ENCODE measurements at regions of chr17 and their contacts with region 1.

Region 1: DNA sequence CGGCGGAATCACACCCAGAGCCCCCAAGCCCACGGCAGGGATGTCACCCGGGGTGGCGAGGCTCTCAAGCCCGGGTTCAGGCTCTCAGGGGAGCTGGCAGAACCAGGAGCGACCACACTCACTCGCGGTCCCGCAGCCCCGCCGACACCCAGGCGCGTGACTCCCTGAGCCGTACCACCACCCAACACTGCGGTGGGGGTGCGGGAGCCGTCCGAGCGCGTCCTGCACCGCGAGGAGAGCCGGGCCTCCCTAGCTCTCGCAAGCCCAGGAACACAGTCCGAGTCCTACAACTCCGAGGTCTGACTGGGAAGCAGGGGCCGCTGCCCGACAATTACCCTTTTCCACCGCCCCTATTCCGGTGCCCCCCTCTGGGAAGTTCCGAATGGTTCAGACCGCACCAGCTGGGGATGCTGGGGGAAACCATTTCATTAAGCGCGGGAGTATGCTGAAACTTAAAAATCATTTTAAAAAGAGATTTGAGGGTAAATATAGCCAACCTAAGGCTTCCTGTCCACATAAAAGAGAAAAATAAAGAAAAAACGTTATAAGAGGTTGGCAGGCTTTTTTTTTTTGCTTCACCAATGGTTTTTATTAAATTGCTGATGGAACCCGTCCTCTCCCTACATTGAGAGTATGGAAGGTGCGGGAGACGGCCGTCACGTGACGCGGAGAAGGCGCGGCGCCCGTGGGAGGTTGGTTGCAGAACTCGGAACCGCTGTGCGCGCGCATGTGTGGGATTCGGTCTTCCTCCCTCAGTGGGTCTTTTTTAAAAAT is at the start of gene FLCN:
- DNase-seq: peak; percentile 78 to 95 (median 87)
- ATAC-seq: peak; percentile 91
- H3K4me3 ChIP-seq: peak within 1 kb of the TSS; percentile 99
- H3K4me3 Mint-ChIP-seq: peak within 1 kb of the TSS; percentile 96
- H3K27ac ChIP-seq: peak within 1 kb of the TSS; percentile 85 to 91
- H3K27ac Mint-ChIP-seq: peak within 1 kb of the TSS; percentile 98
- H3K4me1 ChIP-seq: peaks cover 26% of the 10 kb centered on the region
- H3K4me1 Mint-ChIP-seq: peaks cover 33% of the 10 kb centered on the region
- H3K27me3 ChIP-seq: no peaks in the 10 kb centered on the region
- H3K27me3 Mint-ChIP-seq: no peaks in the 10 kb centered on the region
- CTCF ChIP-seq: no peak
- total RNA-seq, gene FLCN: 12.1 to 15.9 TPM

Region 2: DNA sequence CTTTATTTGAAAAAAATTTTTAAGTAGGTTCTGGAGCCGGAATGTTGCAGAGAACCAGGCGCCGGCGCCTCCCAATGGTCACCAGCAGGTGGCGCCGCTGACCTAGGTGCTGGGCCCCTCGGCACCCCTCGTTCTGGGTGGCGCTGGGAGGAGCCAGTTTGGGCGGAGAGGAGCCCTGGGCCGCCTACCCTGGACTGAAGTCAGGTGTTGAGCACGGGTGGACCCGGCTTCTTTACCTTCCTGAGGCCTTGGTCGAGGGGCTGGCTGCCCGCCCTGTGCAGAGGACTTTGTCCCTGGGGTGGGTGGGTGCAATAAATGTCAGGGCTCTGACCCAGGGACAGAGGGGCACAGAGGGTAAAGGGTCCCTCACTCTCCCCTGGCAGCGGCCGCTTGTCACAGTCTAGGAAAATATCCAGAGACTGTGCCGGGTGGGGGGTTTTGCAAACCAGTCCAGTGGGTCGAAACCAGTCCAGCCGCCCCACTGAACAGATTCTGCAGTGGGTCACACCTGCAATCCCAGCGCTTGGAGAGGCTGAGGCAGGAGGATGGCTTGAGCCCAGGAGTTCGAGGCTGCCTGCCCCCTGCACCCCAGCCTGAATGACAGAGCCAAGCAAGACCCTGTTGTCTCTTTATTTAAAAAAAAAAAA is 235.2 kb before region 1 on chr17:
- CTCF ChIA-PET with region 1: no interaction called
- POLR2A ChIA-PET with region 1: no interaction called
- intact Hi-C with region 1: loop called in 1 of 2 experiments (anchors 10 kb)
- DNase-seq: peak; percentile 54 to 87 (median 74)
- ATAC-seq: peak; percentile 97
- H3K4me3 ChIP-seq: no peak overlapping the region
- H3K4me3 Mint-ChIP-seq: no peak overlapping the region
- H3K27ac ChIP-seq: no peak overlapping the region
- H3K27ac Mint-ChIP-seq: no peak overlapping the region
- H3K4me1 ChIP-seq: peaks cover 16% of the 10 kb centered on the region
- H3K4me1 Mint-ChIP-seq: peaks cover 5% of the 10 kb centered on the region
- H3K27me3 ChIP-seq: no peaks in the 10 kb centered on the region
- H3K27me3 Mint-ChIP-seq: no peaks in the 10 kb centered on the region
- CTCF ChIP-seq: peak; percentile 96

Region 3: DNA sequence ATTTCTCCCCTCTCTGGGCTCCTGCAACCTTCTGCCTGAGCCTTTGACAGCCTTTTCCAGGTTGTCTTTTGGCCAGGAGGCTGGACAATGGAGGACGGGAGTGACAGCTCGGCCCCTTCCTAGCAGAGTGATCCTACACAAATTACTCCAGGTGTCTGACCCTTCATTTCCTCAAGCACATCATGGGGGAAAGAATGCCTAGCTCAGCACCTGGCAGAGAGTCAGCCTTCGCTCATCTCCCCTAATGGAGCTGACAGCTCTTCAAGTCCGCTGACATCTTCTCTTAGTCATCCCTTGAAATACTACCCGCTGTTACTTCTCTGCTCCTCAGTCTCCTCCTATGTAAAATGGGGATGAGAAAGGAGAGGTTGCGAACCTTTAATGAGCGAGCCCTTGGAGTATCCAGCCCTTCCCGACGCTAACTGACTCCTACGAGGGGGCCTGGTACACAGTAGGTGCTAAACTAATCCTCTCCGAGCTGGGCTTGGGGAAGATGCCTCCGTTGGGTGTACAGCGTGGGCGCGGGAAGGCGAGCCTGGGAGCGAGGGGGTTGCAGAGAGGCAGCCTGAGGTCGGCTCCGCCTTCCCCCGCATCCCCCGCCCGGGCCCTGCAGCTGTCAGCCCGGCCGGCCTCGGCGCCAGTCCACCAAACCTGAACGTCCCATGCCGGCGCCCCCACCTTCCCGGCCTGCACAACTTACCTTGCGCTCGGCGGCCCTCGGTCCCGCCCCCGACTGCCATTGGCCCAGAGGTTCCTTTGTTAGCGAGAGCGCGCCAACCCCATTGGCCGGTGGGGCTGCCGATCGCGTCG is 195.4 kb before region 1 on chr17:
- CTCF ChIA-PET with region 1: no interaction called
- POLR2A ChIA-PET with region 1: no interaction called
- intact Hi-C with region 1: loop called in 1 of 2 experiments (anchors 2 kb)
- DNase-seq: peak; percentile 92 to 98 (median 97)
- ATAC-seq: peak; percentile 98
- H3K4me3 ChIP-seq: peak overlapping the region; percentile 59
- H3K4me3 Mint-ChIP-seq: peak overlapping the region; percentile 81
- H3K27ac ChIP-seq: no peak overlapping the region
- H3K27ac Mint-ChIP-seq: peak overlapping the region; percentile 70
- H3K4me1 ChIP-seq: peaks cover 40% of the 10 kb centered on the region
- H3K4me1 Mint-ChIP-seq: peaks cover 48% of the 10 kb centered on the region
- H3K27me3 ChIP-seq: no peaks in the 10 kb centered on the region
- H3K27me3 Mint-ChIP-seq: no peaks in the 10 kb centered on the region
- CTCF ChIP-seq: no peak

Region 4: GRCh38 chr17:17132746-17133145 is 104.5 kb before region 1 on chr17:
- CTCF ChIA-PET with region 1: no interaction called
- POLR2A ChIA-PET with region 1: no interaction called
- intact Hi-C with region 1: no loop called
- DNase-seq: no peak
- ATAC-seq: no peak
- H3K4me3 ChIP-seq: no peak overlapping the region
- H3K4me3 Mint-ChIP-seq: no peak overlapping the region
- H3K27ac ChIP-seq: no peak overlapping the region
- H3K27ac Mint-ChIP-seq: no peak overlapping the region
- H3K4me1 ChIP-seq: peaks cover 20% of the 10 kb centered on the region
- H3K4me1 Mint-ChIP-seq: peaks cover 4% of the 10 kb centered on the region
- H3K27me3 ChIP-seq: no peaks in the 10 kb centered on the region
- H3K27me3 Mint-ChIP-seq: no peaks in the 10 kb centered on the region
- CTCF ChIP-seq: no peak

Region 5: GRCh38 chr17:17206124-17206912 is 30.9 kb before region 1 on chr17 and contains the start of gene PLD6:
- CTCF ChIA-PET with region 1: no interaction called
- POLR2A ChIA-PET with region 1: interaction called, 5 read pairs
- intact Hi-C with region 1: loop called in 1 of 2 experiments (anchors 1 kb)
- DNase-seq: peak; percentile 85 to 97 (median 90)
- ATAC-seq: peak; percentile 73
- H3K4me3 ChIP-seq: peak within 1 kb of the TSS; percentile 84
- H3K4me3 Mint-ChIP-seq: peak within 1 kb of the TSS; percentile 93
- H3K27ac ChIP-seq: peak within 1 kb of the TSS; percentile 45 to 53
- H3K27ac Mint-ChIP-seq: peak within 1 kb of the TSS; percentile 92
- H3K4me1 ChIP-seq: peaks cover 34% of the 10 kb centered on the region
- H3K4me1 Mint-ChIP-seq: peaks cover 24% of the 10 kb centered on the region
- H3K27me3 ChIP-seq: no peaks in the 10 kb centered on the region
- H3K27me3 Mint-ChIP-seq: no peaks in the 10 kb centered on the region
- CTCF ChIP-seq: no peak
- total RNA-seq, gene PLD6: 7.1 to 7.5 TPM

Region 6: GRCh38 chr17:17303010-17303846 is 66.0 kb after region 1 on chr17 and contains the start of gene NT5M:
- CTCF ChIA-PET with region 1: no interaction called
- POLR2A ChIA-PET with region 1: interaction called, 6 read pairs
- intact Hi-C with region 1: loop called in 1 of 2 experiments (anchors 5 kb)
- DNase-seq: peak in 13 of 14 experiments; percentile 29 to 83 (median 59)
- ATAC-seq: peak; percentile 61
- H3K4me3 ChIP-seq: peak within 1 kb of the TSS; percentile 46
- H3K4me3 Mint-ChIP-seq: peak within 1 kb of the TSS; percentile 88
- H3K27ac ChIP-seq: no peak within 1 kb of the TSS
- H3K27ac Mint-ChIP-seq: peak within 1 kb of the TSS; percentile 86
- H3K4me1 ChIP-seq: peaks cover 45% of the 10 kb centered on the region
- H3K4me1 Mint-ChIP-seq: peaks cover 36% of the 10 kb centered on the region
- H3K27me3 ChIP-seq: no peaks in the 10 kb centered on the region
- H3K27me3 Mint-ChIP-seq: no peaks in the 10 kb centered on the region
- CTCF ChIP-seq: no peak
- total RNA-seq, gene NT5M: 1.8 to 2.9 TPM